Spleen (tissue), 13 donors: ENCODE measurements at regions of chr16 and their contacts with region 1.

Region 1: DNA sequence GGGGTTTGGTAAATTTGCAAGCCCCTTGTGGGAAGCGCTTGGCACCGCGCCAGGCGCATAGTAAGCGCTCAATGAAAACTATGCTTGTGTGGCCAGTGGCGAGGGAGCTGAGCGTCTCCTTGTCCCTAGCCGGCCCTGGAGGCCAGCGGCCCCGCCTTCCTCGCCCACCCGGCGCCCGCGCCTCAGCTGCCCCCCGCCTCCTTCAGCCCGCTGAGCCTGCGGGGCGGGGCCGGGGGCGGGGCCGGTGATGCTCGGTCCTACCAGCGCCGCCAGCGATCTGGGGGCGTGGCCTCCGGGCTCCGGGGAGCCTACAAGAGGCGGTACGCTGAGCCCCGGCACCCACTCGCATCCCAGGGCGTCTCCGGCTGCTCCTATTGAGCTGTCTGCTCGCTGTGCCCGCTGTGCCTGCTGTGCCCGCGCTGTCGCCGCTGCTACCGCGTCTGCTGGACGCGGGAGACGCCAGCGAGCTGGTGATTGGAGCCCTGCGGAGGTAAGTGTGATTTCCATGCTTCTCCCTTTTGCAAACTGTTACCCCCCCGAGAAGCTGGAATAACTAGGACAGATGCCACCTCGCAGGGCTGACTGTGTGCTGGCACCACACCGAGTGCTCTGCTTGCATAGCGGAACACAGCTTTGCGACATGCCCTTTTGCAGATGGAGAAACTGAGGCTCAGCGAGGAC is at the start of gene CRISPLD2:
- DNase-seq: peak; percentile 97
- H3K4me3 ChIP-seq: peak within 1 kb of the TSS; percentile 37 to 73 (median 56)
- H3K27ac ChIP-seq: peak within 1 kb of the TSS in 6 of 8 donors; percentile 52 to 85 (median 72)
- H3K4me1 ChIP-seq: peaks cover 5 to 57% (median 24%) of the 10 kb centered on the region in 6 donors
- H3K27me3 ChIP-seq: peaks cover 0 to 76% (median 9%) of the 10 kb centered on the region in 7 donors
- CTCF ChIP-seq: peak in 1 of 11 experiments; percentile 16
- POLR2A ChIP-seq: peak; percentile 53 to 79 (median 55)
- total RNA-seq, gene CRISPLD2: 38.5 to 271 (median 92.8) TPM

Region 2: GRCh38 chr16:84864326-84864955 is 44.7 kb after region 1 on chr16:
- intact Hi-C with region 1: no loop called
- DNase-seq: no peak
- H3K4me3 ChIP-seq: no peak overlapping the region
- H3K27ac ChIP-seq: no peak overlapping the region
- H3K4me1 ChIP-seq: no peaks in the 10 kb centered on the region
- H3K27me3 ChIP-seq: peaks cover 0 to 24% (median 0%) of the 10 kb centered on the region in 7 donors
- CTCF ChIP-seq: no peak
- POLR2A ChIP-seq: no peak

Region 3: GRCh38 chr16:84881702-84882521 is 62.1 kb after region 1 on chr16:
- intact Hi-C with region 1: loop called (anchors 10 kb)
- DNase-seq: no peak
- H3K4me3 ChIP-seq: no peak overlapping the region
- H3K27ac ChIP-seq: peak overlapping the region in 2 of 8 donors; percentile 19 to 39
- H3K4me1 ChIP-seq: peaks cover 0 to 30% (median 12%) of the 10 kb centered on the region in 6 donors
- H3K27me3 ChIP-seq: peaks cover 0 to 26% (median 0%) of the 10 kb centered on the region in 7 donors
- CTCF ChIP-seq: no peak
- POLR2A ChIP-seq: no peak

Region 4: GRCh38 chr16:84907575-84907974 is 87.8 kb after region 1 on chr16:
- intact Hi-C with region 1: no loop called
- DNase-seq: no peak
- H3K4me3 ChIP-seq: no peak overlapping the region
- H3K27ac ChIP-seq: peak overlapping the region; percentile 4 to 95 (median 43)
- H3K4me1 ChIP-seq: peaks cover 0 to 68% (median 27%) of the 10 kb centered on the region in 6 donors
- H3K27me3 ChIP-seq: no peaks in the 10 kb centered on the region
- CTCF ChIP-seq: peak in 2 of 11 experiments; percentile 20 to 47
- POLR2A ChIP-seq: no peak

Region 5: GRCh38 chr16:85104821-85105391 is 285.1 kb after region 1 on chr16:
- intact Hi-C with region 1: no loop called
- DNase-seq: peak; percentile 87
- H3K4me3 ChIP-seq: peak overlapping the region in 1 of 8 donors; percentile 9
- H3K27ac ChIP-seq: peak overlapping the region in 5 of 8 donors; percentile 36 to 68 (median 53)
- H3K4me1 ChIP-seq: peaks cover 9 to 41% (median 28%) of the 10 kb centered on the region in 6 donors
- H3K27me3 ChIP-seq: no peaks in the 10 kb centered on the region
- CTCF ChIP-seq: no peak
- POLR2A ChIP-seq: no peak